ENCODE measurements at regions of chr17 and their contacts with region 1.

Region 1: GRCh38 chr17:56913864-56914640 is at the start of gene TRIM25:
- DNase-seq: peak; percentile 57 to 90 (median 79)
- ATAC-seq: peak; percentile 91
- H3K4me3 ChIP-seq: peak within 1 kb of the TSS; percentile 93
- H3K4me3 Mint-ChIP-seq: peak within 1 kb of the TSS; percentile 80 to 97 (median 91)
- H3K27ac ChIP-seq: peak within 1 kb of the TSS; percentile 90
- H3K27ac Mint-ChIP-seq: peak within 1 kb of the TSS; percentile 88 to 95 (median 93)
- H3K4me1 ChIP-seq: peaks cover 29 to 35% of the 10 kb centered on the region in 2 donors
- H3K4me1 Mint-ChIP-seq: peaks cover 20 to 52% (median 46%) of the 10 kb centered on the region in 7 donors
- H3K27me3 ChIP-seq: no peaks in the 10 kb centered on the region
- H3K27me3 Mint-ChIP-seq: no peaks in the 10 kb centered on the region
- total RNA-seq, gene TRIM25: 45.9 to 133 (median 61.8) TPM

Region 2: DNA sequence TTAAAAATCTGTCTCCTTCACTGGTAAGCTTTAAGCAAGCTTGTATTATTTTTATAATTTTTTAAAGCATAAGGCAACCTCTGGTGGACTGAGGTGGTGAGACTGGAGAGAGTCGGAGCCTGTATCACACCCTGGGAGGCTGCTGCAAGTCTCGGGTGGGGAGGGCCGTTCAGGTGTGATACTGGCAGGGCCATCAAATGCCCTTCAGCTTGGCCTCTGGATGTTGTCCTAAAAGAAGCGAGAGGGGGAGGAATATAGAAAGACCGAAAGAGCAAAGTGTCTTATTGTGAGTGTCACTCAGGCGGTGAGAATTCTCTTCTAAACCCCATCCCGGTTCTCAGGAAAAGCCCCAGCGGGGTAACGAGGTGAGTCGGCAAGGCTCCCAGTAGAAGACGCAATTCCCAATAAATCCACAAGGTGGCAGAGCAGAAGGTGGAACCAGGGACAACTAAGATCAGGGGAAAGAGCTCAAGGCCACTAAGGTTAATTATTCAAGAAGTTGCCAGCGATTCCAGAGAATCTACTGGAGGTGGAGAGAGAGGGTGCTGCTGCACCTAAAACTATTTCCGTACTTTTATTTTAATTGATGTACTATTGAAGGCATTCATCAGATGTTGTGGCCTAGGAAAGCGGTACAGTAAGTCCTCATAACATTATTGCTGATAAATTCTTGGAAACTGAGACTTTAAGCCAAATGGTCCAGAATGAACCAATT is 94.5 kb before region 1 on chr17:
- CTCF ChIA-PET with region 1: no interaction called
- POLR2A ChIA-PET with region 1: no interaction called
- intact Hi-C with region 1: loop called in 1 of 2 experiments (anchors 1 kb)
- DNase-seq: peak; percentile 38 to 78 (median 68)
- ATAC-seq: peak; percentile 90
- H3K4me3 ChIP-seq: no peak overlapping the region
- H3K4me3 Mint-ChIP-seq: no peak overlapping the region
- H3K27ac ChIP-seq: no peak overlapping the region
- H3K27ac Mint-ChIP-seq: peak overlapping the region in 2 of 9 donors; percentile 48 to 76
- H3K4me1 ChIP-seq: no peaks in the 10 kb centered on the region
- H3K4me1 Mint-ChIP-seq: peaks cover 5 to 9% (median 8%) of the 10 kb centered on the region in 7 donors
- H3K27me3 ChIP-seq: no peaks in the 10 kb centered on the region
- H3K27me3 Mint-ChIP-seq: no peaks in the 10 kb centered on the region

Region 3: DNA sequence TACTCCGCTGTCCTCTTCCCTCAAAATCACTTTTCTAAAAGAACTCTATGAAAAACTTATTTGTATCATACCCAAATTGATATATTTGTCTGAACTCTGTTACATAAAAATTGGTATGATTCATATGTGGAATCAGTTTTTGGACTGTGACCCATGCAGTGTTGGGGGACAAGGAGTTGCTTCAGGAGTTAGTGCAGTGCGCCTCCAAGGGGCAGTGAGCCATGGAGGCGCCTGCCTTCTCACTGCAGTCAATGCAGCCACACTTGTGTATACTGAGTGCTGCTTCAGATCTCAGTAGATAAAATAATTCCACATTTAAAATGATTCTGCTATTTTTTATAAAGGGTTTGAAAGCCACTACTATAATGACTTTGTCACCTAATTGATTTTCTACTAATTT is 47.6 kb before region 1 on chr17:
- CTCF ChIA-PET with region 1: no interaction called
- POLR2A ChIA-PET with region 1: no interaction called
- intact Hi-C with region 1: no loop called
- DNase-seq: peak in 1 of 9 donors; percentile 6
- ATAC-seq: no peak
- H3K4me3 ChIP-seq: no peak overlapping the region
- H3K4me3 Mint-ChIP-seq: no peak overlapping the region
- H3K27ac ChIP-seq: no peak overlapping the region
- H3K27ac Mint-ChIP-seq: peak overlapping the region in 1 of 9 donors; percentile 57
- H3K4me1 ChIP-seq: no peaks in the 10 kb centered on the region
- H3K4me1 Mint-ChIP-seq: peaks cover 0 to 6% (median 0%) of the 10 kb centered on the region in 7 donors
- H3K27me3 ChIP-seq: no peaks in the 10 kb centered on the region
- H3K27me3 Mint-ChIP-seq: no peaks in the 10 kb centered on the region

Region 4: DNA sequence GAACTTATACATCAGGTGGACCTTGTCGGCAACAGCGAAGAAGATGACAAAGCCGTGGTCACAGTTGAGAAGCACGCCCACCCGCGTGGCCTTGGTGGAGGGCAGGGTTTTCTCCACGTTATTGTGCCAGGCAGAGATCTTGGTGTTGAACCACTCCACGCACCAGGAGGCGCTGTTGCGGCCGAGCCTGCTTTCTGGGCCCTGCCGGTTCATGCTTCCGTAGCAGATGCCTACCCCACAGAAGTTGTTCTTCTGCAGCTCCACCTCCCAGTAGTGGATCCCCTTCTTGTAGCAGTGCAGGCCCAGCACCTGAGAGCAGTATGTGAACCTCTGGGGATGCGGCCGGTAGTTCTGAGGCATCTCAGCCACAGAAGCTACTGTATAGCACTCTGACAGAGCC is 22.3 kb before region 1 on chr17:
- CTCF ChIA-PET with region 1: no interaction called
- POLR2A ChIA-PET with region 1: interaction called, 3 read pairs
- intact Hi-C with region 1: loop called in 1 of 2 experiments (anchors 1 kb)
- DNase-seq: peak; percentile 16 to 61 (median 47)
- ATAC-seq: peak; percentile 74
- H3K4me3 ChIP-seq: no peak overlapping the region
- H3K4me3 Mint-ChIP-seq: no peak overlapping the region
- H3K27ac ChIP-seq: no peak overlapping the region
- H3K27ac Mint-ChIP-seq: no peak overlapping the region
- H3K4me1 ChIP-seq: no peaks in the 10 kb centered on the region
- H3K4me1 Mint-ChIP-seq: peaks cover 0 to 12% (median 0%) of the 10 kb centered on the region in 7 donors
- H3K27me3 ChIP-seq: no peaks in the 10 kb centered on the region
- H3K27me3 Mint-ChIP-seq: no peaks in the 10 kb centered on the region

Region 5: DNA sequence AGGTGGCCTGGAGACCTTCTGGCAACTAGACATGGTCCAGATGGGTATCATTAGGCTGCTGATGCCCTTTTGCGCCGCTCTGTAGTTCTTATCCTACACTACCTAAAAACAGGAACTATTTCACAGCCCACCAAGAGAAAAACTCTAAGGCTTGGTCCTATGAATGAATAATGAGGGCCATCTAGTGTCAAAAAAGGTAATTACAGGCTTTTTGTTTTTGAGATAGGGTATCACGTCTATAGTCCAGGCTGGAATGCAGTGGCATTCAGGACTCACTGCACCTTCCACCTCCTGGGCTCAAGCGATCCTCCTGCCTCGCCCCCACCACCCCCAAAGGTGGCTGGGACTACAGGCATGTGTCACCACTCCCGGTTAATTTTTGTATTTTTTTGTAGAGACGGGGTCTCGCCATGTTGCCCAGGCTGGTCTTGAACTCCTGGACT is 25.9 kb after region 1 on chr17:
- CTCF ChIA-PET with region 1: interaction called, 5 read pairs
- POLR2A ChIA-PET with region 1: no interaction called
- intact Hi-C with region 1: loop called in 1 of 2 experiments (anchors 1 kb)
- DNase-seq: peak in 7 of 9 donors; percentile 27 to 64 (median 52)
- ATAC-seq: peak; percentile 80
- H3K4me3 ChIP-seq: no peak overlapping the region
- H3K4me3 Mint-ChIP-seq: no peak overlapping the region
- H3K27ac ChIP-seq: no peak overlapping the region
- H3K27ac Mint-ChIP-seq: peak overlapping the region in 5 of 9 donors; percentile 4 to 85 (median 65)
- H3K4me1 ChIP-seq: no peaks in the 10 kb centered on the region
- H3K4me1 Mint-ChIP-seq: peaks cover 0 to 19% (median 0%) of the 10 kb centered on the region in 7 donors
- H3K27me3 ChIP-seq: no peaks in the 10 kb centered on the region
- H3K27me3 Mint-ChIP-seq: no peaks in the 10 kb centered on the region

Region 6: DNA sequence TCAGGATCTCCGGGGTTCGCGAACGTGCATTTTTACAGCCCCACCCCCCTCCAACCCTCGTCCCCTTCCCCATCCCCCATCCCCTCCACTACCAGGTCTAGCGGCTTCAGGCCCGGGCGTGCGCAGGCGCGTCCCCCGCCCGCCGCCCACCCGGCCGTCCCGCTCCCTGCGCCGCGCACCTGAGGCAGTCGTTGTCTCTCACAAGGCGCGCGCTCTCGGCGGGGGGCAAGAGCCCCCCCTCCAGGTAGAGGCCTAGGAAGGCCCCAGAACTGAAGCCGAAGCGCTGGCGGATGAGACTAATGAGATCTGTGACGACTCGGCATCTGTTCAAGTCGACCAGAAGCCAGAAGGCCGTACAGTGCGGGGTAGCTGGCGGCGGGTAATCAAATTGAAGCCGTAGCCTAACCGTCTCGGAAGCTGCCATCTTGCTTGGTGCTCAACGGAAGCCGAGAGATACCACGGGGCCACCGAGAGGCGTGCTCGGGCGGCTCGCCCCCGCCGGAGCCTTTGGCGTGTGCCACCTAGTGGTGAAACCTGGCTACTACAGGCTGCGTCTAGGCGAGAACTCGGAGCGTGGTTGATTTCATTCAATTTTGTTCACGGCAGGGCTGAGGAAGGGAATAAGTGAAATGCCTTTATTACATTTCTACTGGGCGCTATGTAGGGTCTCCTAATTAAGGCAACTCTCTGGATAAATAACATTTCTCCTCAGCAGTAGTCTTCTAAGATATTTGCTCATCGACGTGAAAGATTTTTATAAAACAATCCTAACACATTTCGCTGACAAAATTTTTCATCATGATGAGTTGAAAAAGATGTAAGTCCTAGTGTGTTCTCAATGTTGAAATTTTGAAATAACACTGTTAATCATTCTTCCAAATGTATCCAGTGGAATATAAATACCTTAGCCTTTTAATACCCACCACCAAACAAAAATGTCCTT is 46.8 kb after region 1 on chr17 and contains the start of gene COIL:
- CTCF ChIA-PET with region 1: no interaction called
- POLR2A ChIA-PET with region 1: no interaction called
- intact Hi-C with region 1: loop called (anchors 1 kb)
- DNase-seq: peak; percentile 90 to 96 (median 92)
- ATAC-seq: peak; percentile 100
- H3K4me3 ChIP-seq: peak within 1 kb of the TSS; percentile 80
- H3K4me3 Mint-ChIP-seq: peak within 1 kb of the TSS; percentile 80 to 93 (median 86)
- H3K27ac ChIP-seq: peak within 1 kb of the TSS; percentile 97
- H3K27ac Mint-ChIP-seq: peak within 1 kb of the TSS; percentile 78 to 95 (median 91)
- H3K4me1 ChIP-seq: peaks cover 6 to 11% of the 10 kb centered on the region in 2 donors
- H3K4me1 Mint-ChIP-seq: peaks cover 14 to 34% (median 28%) of the 10 kb centered on the region in 7 donors
- H3K27me3 ChIP-seq: no peaks in the 10 kb centered on the region
- H3K27me3 Mint-ChIP-seq: peaks cover 0 to 3% (median 0%) of the 10 kb centered on the region in 5 donors
- total RNA-seq, gene COIL: 13.1 to 22.7 (median 19.0) TPM

Region 7: GRCh38 chr17:56977673-56978395 is 63.8 kb after region 1 on chr17 and contains the start of gene SCPEP1:
- CTCF ChIA-PET with region 1: no interaction called
- POLR2A ChIA-PET with region 1: interaction called, 3 read pairs
- intact Hi-C with region 1: loop called (anchors 1 to 5 kb)
- DNase-seq: peak; percentile 65 to 82 (median 76)
- ATAC-seq: peak; percentile 99
- H3K4me3 ChIP-seq: peak within 1 kb of the TSS; percentile 92
- H3K4me3 Mint-ChIP-seq: peak within 1 kb of the TSS; percentile 85 to 96 (median 93)
- H3K27ac ChIP-seq: peak within 1 kb of the TSS; percentile 63
- H3K27ac Mint-ChIP-seq: peak within 1 kb of the TSS; percentile 70 to 98 (median 86)
- H3K4me1 ChIP-seq: peaks cover 10 to 12% of the 10 kb centered on the region in 2 donors
- H3K4me1 Mint-ChIP-seq: peaks cover 11 to 33% (median 24%) of the 10 kb centered on the region in 7 donors
- H3K27me3 ChIP-seq: no peaks in the 10 kb centered on the region
- H3K27me3 Mint-ChIP-seq: peaks cover 0 to 32% (median 0%) of the 10 kb centered on the region in 5 donors
- total RNA-seq, gene SCPEP1: 8.4 to 81.6 (median 27.1) TPM

Region 8: DNA sequence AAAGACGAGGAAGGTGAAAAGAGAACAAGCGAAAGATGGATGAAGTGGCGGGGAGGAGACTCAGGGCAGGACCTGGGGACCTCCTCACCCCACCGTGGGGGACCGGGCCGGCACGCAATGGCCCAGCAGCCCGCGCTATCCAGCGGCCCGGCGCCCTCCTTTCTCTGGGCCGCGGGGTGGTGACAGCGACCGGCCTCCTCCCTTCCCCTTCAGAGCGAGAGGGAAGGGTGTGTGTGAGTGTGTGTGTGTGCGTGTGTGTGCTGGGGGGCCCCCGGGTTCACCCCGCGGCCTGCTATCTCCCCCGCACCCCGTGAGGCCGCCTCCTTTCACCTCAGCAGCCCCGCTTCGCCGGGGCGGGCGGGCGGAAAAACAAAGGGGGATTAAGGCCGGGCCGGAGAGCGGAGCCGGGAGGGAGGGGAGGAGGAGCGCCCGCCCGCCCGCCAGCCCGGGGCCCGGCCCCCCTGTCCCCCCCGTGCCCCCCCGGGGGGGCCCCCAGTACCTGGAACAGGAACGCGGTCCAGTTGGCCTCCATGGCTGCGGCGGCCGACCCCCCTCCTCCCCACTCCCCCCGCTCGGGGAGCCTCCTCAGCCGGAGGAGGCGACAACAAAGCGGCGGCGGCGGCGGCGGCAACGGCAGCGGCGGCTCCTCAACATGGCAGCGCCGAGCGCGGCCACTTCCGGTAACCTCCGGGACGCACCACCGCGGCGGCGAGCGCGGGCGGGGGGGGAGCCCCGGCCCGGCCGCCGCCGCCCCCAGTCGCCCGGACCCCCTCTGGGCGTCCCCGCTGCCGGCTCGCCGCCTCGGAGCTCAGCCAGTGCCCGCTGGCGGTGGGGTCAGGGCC is 1073.7 kb after region 1 on chr17 and contains the start of gene VEZF1:
- CTCF ChIA-PET with region 1: no interaction called
- POLR2A ChIA-PET with region 1: no interaction called
- intact Hi-C with region 1: loop called in 1 of 2 experiments (anchors 5 kb)
- DNase-seq: peak; percentile 66 to 85 (median 75)
- ATAC-seq: peak; percentile 84
- H3K4me3 ChIP-seq: peak within 1 kb of the TSS; percentile 94
- H3K4me3 Mint-ChIP-seq: peak within 1 kb of the TSS; percentile 92 to 96 (median 95)
- H3K27ac ChIP-seq: peak within 1 kb of the TSS; percentile 87
- H3K27ac Mint-ChIP-seq: peak within 1 kb of the TSS; percentile 90 to 98 (median 95)
- H3K4me1 ChIP-seq: peaks cover 39 to 45% of the 10 kb centered on the region in 2 donors
- H3K4me1 Mint-ChIP-seq: peaks cover 45 to 81% (median 75%) of the 10 kb centered on the region in 7 donors
- H3K27me3 ChIP-seq: no peaks in the 10 kb centered on the region
- H3K27me3 Mint-ChIP-seq: no peaks in the 10 kb centered on the region
- total RNA-seq, gene VEZF1: 43.2 to 81.9 (median 46.3) TPM